Endothelial cell of umbilical vein (primary cell): ENCODE measurements at regions of chr14 and their contacts with region 1.

Region 1: GRCh38 chr14:70027785-70028428 is 148.7 kb downstream of the SMOC1 start:
- DNase-seq: peak; percentile 56
- H3K4me3 ChIP-seq: no peak overlapping the region
- H3K27ac ChIP-seq: no peak overlapping the region
- H3K4me1 ChIP-seq: no peaks in the 10 kb centered on the region
- H3K27me3 ChIP-seq: peaks cover 0 to 2% of the 10 kb centered on the region in 2 experiments
- CTCF ChIP-seq: peak; percentile 91 to 92
- POLR2A ChIP-seq: no peak

Region 2: DNA sequence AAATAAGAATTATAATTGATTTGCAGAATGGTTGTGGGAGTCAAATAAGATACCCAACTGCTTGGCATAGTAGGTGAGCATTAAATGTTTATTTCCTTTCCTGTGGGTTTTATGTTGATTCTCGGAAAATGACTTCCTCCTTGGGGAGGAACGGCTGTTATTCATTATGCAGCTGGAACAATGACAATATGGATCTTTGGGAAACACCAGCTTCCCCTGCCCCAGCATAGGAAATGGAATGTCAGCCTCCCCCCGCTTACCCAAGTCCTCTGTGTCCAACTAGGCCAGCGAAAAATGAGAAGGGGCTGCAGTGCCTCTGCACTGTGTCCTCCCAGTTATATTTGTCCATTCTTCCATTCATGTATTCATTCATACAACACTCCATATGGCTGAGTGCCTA is 441.5 kb before region 1 on chr14:
- CTCF ChIA-PET with region 1: interaction called, 10 read pairs
- POLR2A ChIA-PET with region 1: no interaction called
- dilution Hi-C with region 1: no loop called
- intact Hi-C with region 1: loop called (anchors 5 kb)
- DNase-seq: peak; percentile 90
- H3K4me3 ChIP-seq: no peak overlapping the region
- H3K27ac ChIP-seq: no peak overlapping the region
- H3K4me1 ChIP-seq: peaks cover 20% of the 10 kb centered on the region
- H3K27me3 ChIP-seq: no peaks in the 10 kb centered on the region
- CTCF ChIP-seq: no peak
- POLR2A ChIP-seq: no peak

Region 3: GRCh38 chr14:69818757-69819191 is 209.1 kb before region 1 on chr14:
- CTCF ChIA-PET with region 1: interaction called, 255 read pairs
- POLR2A ChIA-PET with region 1: no interaction called
- dilution Hi-C with region 1: no loop called
- intact Hi-C with region 1: loop called (anchors 1 kb)
- DNase-seq: peak; percentile 83
- H3K4me3 ChIP-seq: no peak overlapping the region
- H3K27ac ChIP-seq: no peak overlapping the region
- H3K4me1 ChIP-seq: no peaks in the 10 kb centered on the region
- H3K27me3 ChIP-seq: peaks cover 4 to 14% of the 10 kb centered on the region in 2 experiments
- CTCF ChIP-seq: peak; percentile 71 to 72
- POLR2A ChIP-seq: no peak

Region 4: DNA sequence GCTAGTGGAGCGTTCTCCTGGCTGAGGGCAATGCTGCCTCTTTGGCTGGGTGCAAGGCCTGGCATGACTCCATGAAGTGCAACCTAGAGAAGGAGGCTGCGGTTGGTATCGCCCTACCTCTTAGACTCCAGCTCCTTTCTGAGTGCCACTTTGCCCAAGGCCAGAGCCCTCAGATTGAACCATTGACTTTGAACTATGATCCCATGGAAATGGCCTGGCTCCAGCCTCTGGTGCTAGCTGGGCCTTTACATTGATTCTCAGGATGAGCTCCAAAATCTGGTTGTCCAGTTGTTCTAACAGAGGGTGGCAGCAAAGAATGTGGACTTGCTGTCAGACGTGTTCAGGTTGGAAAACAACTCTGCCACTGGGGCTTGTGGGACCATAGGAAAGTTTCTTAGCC is 164.8 kb before region 1 on chr14:
- CTCF ChIA-PET with region 1: interaction called, 11 read pairs
- POLR2A ChIA-PET with region 1: no interaction called
- dilution Hi-C with region 1: no loop called
- intact Hi-C with region 1: no loop called
- DNase-seq: no peak
- H3K4me3 ChIP-seq: no peak overlapping the region
- H3K27ac ChIP-seq: no peak overlapping the region
- H3K4me1 ChIP-seq: no peaks in the 10 kb centered on the region
- H3K27me3 ChIP-seq: no peaks in the 10 kb centered on the region
- CTCF ChIP-seq: no peak
- POLR2A ChIP-seq: no peak

Region 5: DNA sequence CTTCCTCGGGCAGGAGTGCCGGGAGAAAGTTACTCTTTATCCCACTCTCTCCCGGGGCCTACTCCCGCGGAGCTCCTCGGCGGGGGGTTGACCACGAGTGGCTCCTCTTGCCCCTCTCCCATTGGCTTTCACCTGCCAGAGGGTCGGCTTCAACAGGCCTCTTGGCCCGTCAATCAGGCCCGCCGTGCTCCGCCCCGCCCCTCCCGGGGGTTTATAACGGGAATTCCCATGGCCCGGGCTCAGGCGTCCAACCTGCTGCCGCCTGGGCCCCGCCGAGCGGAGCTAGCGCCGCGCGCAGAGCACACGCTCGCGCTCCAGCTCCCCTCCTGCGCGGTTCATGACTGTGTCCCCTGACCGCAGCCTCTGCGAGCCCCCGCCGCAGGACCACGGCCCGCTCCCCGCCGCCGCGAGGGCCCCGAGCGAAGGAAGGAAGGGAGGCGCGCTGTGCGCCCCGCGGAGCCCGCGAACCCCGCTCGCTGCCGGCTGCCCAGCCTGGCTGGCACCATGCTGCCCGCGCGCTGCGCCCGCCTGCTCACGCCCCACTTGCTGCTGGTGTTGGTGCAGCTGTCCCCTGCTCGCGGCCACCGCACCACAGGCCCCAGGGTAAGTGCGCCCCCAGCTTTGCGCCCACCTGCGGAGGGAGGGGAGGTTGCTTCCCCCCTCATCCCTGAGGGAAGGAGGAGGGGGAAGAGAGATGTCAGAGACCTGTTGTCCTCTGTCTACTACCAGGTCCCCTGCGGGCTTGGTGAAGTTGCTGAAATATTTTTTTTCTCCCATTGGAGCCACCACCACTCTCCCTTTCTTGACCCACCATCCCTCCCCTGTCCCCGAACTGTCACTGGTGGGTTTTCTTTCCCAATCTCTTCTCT is 148.5 kb before region 1 on chr14 and contains the start of gene SMOC1:
- CTCF ChIA-PET with region 1: interaction called, 110 read pairs
- POLR2A ChIA-PET with region 1: no interaction called
- dilution Hi-C with region 1: no loop called
- intact Hi-C with region 1: loop called (anchors 1 kb)
- DNase-seq: peak; percentile 57
- H3K4me3 ChIP-seq: peak within 1 kb of the TSS in 1 of 3 experiments; percentile 12
- H3K27ac ChIP-seq: no peak within 1 kb of the TSS
- H3K4me1 ChIP-seq: no peaks in the 10 kb centered on the region
- H3K27me3 ChIP-seq: peaks cover 34% of the 10 kb centered on the region in 2 experiments
- CTCF ChIP-seq: no peak
- POLR2A ChIP-seq: no peak
- total RNA-seq, gene SMOC1: 0.78 and 0.97 TPM in 2 replicates

Region 6: GRCh38 chr14:70013269-70013873 is 14.5 kb before region 1 on chr14:
- CTCF ChIA-PET with region 1: interaction called, 69 read pairs
- POLR2A ChIA-PET with region 1: no interaction called
- dilution Hi-C with region 1: no loop called
- intact Hi-C with region 1: no loop called
- DNase-seq: peak; percentile 34
- H3K4me3 ChIP-seq: no peak overlapping the region
- H3K27ac ChIP-seq: no peak overlapping the region
- H3K4me1 ChIP-seq: no peaks in the 10 kb centered on the region
- H3K27me3 ChIP-seq: no peaks in the 10 kb centered on the region
- CTCF ChIP-seq: peak; percentile 78 to 80
- POLR2A ChIP-seq: no peak

Region 7: GRCh38 chr14:70073924-70074566 is 46.1 kb after region 1 on chr14:
- CTCF ChIA-PET with region 1: interaction called, 11 read pairs
- POLR2A ChIA-PET with region 1: no interaction called
- dilution Hi-C with region 1: no loop called
- intact Hi-C with region 1: no loop called
- DNase-seq: peak; percentile 35
- H3K4me3 ChIP-seq: no peak overlapping the region
- H3K27ac ChIP-seq: no peak overlapping the region
- H3K4me1 ChIP-seq: no peaks in the 10 kb centered on the region
- H3K27me3 ChIP-seq: no peaks in the 10 kb centered on the region
- CTCF ChIP-seq: peak; percentile 71 to 83
- POLR2A ChIP-seq: no peak

Region 8: GRCh38 chr14:70842851-70843462 is 815.0 kb after region 1 on chr14:
- CTCF ChIA-PET with region 1: no interaction called
- POLR2A ChIA-PET with region 1: no interaction called
- dilution Hi-C with region 1: no loop called
- intact Hi-C with region 1: no loop called
- DNase-seq: peak; percentile 18
- H3K4me3 ChIP-seq: no peak overlapping the region
- H3K27ac ChIP-seq: no peak overlapping the region
- H3K4me1 ChIP-seq: no peaks in the 10 kb centered on the region
- H3K27me3 ChIP-seq: peaks cover 2 to 3% of the 10 kb centered on the region in 2 experiments
- CTCF ChIP-seq: no peak
- POLR2A ChIP-seq: no peak